ENCODE measurements at regions of chr2 and their contacts with region 1.

Region 1: GRCh38 chr2:3959372-3959771 is 256.0 kb downstream of the DCDC2C start:
- DNase-seq: no peak
- ATAC-seq: no peak
- H3K4me3 ChIP-seq: no peak overlapping the region
- H3K27ac ChIP-seq: no peak overlapping the region
- H3K4me1 ChIP-seq: no peaks in the 10 kb centered on the region
- H3K27me3 ChIP-seq: no peaks in the 10 kb centered on the region

Region 2: DNA sequence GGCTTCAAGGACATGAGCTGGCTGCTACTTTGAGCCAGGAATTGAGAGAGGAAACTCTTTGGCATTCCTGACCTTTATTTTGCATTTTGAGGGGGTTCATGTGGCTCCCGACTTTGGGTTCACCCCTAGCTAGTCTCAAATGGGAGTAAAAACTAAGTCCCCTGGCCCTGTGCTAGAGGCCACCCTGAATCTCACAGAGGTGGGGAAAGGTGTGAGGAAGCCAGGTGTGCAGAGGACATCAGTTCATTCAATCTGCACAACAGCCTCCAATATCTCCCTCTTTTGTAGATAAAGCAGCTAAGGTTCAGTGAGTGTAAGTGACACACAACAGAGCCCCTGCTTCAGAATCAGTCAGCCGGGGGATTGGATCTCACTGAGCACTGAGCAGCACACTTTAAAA is 69.7 kb after region 1 on chr2:
- intact Hi-C with region 1: no loop called
- DNase-seq: no peak
- ATAC-seq: no peak
- H3K4me3 ChIP-seq: no peak overlapping the region
- H3K27ac ChIP-seq: no peak overlapping the region
- H3K4me1 ChIP-seq: no peaks in the 10 kb centered on the region
- H3K27me3 ChIP-seq: no peaks in the 10 kb centered on the region

Region 3: DNA sequence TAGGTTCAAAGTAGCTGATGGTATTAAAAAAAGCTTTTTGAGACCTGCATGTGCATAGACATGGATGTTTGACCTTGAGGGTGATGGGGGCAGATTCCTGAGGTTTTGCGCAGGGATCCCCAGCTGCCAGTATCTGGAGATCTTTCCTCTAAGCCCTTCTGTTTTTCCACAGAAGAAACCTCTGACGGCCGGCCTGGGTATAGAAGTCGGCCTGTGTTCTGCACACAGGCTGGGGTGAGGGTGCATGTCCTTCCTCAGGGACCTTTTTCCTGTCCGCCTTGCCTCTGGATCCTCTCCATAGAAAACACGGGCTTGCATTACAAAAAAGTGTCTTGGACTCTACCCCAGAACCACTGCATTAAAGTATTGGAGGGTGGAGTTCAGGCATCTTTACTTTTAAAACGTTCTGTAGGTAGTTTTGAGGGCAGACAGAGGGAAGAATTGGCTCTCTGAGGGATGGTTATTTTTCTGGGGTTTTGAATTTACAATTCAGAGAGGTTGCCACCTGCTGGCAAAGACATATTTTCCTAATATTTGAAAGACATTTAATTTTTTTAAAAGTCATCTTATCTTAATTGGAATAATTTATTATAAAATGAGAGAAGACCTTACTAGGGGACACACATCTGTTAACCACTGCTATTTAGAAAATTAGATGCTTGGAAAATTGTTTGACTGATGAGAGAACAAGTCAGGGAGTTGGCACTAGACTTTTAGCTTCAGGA is 94.6 kb after region 1 on chr2:
- intact Hi-C with region 1: loop called in 1 of 4 experiments (anchors 10 kb)
- DNase-seq: no peak
- ATAC-seq: peak in 1 of 2 donors; percentile 29
- H3K4me3 ChIP-seq: no peak overlapping the region
- H3K27ac ChIP-seq: no peak overlapping the region
- H3K4me1 ChIP-seq: peaks cover 2% of the 10 kb centered on the region
- H3K27me3 ChIP-seq: no peaks in the 10 kb centered on the region

Region 4: DNA sequence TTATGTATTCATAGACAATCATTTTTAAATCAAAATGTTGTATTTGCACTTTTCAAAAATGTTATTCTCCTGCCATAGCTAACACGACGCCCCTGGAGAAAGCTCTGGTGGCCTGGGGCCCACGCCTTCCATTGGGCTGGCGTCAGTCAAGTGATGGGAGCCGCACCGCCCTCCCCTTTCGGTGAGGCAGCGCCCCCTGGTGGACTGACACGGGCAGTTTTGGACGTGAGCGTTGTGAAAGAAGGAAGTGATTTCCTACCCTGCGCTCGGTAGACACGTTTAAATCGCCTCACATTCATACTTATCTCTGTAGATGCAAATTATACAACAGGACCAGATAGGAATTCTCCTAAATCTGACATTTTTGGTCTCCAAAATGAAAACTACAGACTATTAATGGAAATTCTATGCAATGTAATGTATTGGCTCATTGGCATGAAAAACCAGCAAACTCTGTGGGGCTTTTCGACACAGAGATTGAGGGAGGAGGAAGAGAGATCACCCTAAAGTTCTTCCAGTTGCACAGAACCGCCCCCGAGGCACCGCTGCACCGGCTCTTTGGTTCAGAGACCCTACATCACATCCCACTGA is 1406.6 kb after region 1 on chr2:
- intact Hi-C with region 1: loop called in 1 of 4 experiments (anchors 10 kb)
- DNase-seq: peak; percentile 54 to 81 (median 81)
- ATAC-seq: peak; percentile 57 to 83
- H3K4me3 ChIP-seq: no peak overlapping the region
- H3K27ac ChIP-seq: no peak overlapping the region
- H3K4me1 ChIP-seq: no peaks in the 10 kb centered on the region
- H3K27me3 ChIP-seq: no peaks in the 10 kb centered on the region